ENCODE measurements at regions of chr20 and their contacts with region 1.

Region 1: DNA sequence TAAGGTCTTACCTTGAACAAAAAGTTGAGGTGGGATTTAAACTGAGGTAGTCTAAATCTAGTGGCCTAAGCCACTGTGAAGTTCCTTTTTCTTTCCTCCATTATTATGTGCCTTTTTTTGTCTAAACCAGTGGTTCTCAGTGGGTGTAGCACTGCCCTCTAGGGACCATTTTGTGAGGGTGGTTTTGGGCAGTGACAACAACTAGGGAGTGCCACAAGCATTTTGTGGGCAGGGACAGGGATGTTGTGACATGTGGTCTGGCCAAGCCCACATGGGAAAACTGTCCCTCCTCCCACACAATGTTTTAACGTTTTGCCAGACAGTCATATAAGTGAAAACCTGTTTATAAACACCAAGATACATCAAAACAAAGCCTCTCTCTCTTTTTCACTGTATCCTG is 899.4 kb upstream of the FLRT3 start:
- DNase-seq: peak; percentile 87
- ATAC-seq: peak; percentile 79
- H3K4me3 ChIP-seq: no peak overlapping the region
- H3K27ac ChIP-seq: no peak overlapping the region
- H3K4me1 ChIP-seq: no peaks in the 10 kb centered on the region
- H3K27me3 ChIP-seq: no peaks in the 10 kb centered on the region
- CTCF ChIP-seq: peak; percentile 90

Region 2: GRCh38 chr20:14744723-14745122 is 492.1 kb before region 1 on chr20:
- CTCF ChIA-PET with region 1: interaction called, 3 read pairs
- POLR2A ChIA-PET with region 1: no interaction called
- intact Hi-C with region 1: loop called (anchors 10 kb)
- DNase-seq: no peak
- ATAC-seq: no peak
- H3K4me3 ChIP-seq: no peak overlapping the region
- H3K27ac ChIP-seq: no peak overlapping the region
- H3K4me1 ChIP-seq: no peaks in the 10 kb centered on the region
- H3K27me3 ChIP-seq: no peaks in the 10 kb centered on the region
- CTCF ChIP-seq: no peak

Region 3: GRCh38 chr20:14888134-14888533 is 348.7 kb before region 1 on chr20:
- CTCF ChIA-PET with region 1: no interaction called
- POLR2A ChIA-PET with region 1: no interaction called
- intact Hi-C with region 1: no loop called
- DNase-seq: no peak
- ATAC-seq: peak; percentile 65
- H3K4me3 ChIP-seq: no peak overlapping the region
- H3K27ac ChIP-seq: no peak overlapping the region
- H3K4me1 ChIP-seq: peaks cover 28% of the 10 kb centered on the region
- H3K27me3 ChIP-seq: no peaks in the 10 kb centered on the region
- CTCF ChIP-seq: no peak

Region 4: GRCh38 chr20:15122613-15123012 is 114.2 kb before region 1 on chr20:
- CTCF ChIA-PET with region 1: no interaction called
- POLR2A ChIA-PET with region 1: no interaction called
- intact Hi-C with region 1: no loop called
- DNase-seq: no peak
- ATAC-seq: no peak
- H3K4me3 ChIP-seq: no peak overlapping the region
- H3K27ac ChIP-seq: no peak overlapping the region
- H3K4me1 ChIP-seq: no peaks in the 10 kb centered on the region
- H3K27me3 ChIP-seq: no peaks in the 10 kb centered on the region
- CTCF ChIP-seq: no peak